Heart left ventricle (tissue), 16 donors: ENCODE measurements at regions of chr4 and their contacts with region 1.

Region 1: GRCh38 chr4:78584863-78585547 is 33.4 kb downstream of the ANXA3 start:
- DNase-seq: no peak
- ATAC-seq: no peak
- H3K4me3 ChIP-seq: no peak overlapping the region
- H3K27ac ChIP-seq: no peak overlapping the region
- H3K4me1 ChIP-seq: peaks cover 0 to 11% (median 0%) of the 10 kb centered on the region in 12 donors
- H3K27me3 ChIP-seq: no peaks in the 10 kb centered on the region
- CTCF ChIP-seq: no peak
- POLR2A ChIP-seq: no peak

Region 2: DNA sequence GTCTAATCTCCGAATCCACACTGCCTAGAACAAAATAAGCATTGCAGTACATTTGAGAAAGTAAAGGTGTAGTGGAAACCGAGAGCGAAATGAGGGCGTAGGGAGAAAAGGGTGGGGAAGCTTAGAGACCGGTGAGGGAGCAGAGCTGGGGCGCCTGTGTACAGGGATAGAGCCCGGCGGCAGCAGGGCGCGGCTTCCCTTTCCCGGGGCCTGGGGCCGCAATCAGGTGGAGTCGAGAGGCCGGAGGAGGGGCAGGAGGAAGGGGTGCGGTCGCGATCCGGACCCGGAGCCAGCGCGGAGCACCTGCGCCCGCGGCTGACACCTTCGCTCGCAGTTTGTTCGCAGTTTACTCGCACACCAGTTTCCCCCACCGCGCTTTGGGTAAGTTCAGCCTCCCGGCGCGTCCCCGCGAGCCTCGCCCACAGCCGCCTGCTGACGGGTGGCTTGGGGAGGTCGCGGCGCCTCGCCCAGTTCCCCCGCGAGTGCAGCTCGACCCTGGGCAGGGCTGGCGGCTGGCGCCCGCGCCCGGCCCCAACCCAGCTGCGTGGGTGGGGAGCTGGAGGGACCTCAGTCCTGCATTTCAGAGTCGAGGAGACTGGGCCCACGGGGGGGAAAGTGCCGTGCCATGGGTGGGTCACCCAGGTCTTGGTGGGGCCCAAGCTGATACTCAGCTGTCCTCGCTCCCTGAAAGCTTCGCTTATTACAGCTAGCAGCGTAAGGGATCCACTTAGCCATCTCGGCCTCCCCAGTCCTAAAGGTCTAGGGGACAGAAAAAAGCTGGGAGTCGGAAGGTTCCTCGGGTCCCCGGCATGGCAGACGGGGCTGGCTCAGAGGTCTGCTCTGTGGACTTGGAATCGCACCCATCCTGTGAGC is 33.3 kb before region 1 on chr4 and contains the start of gene ANXA3:
- intact Hi-C with region 1: loop called in 1 of 10 experiments (anchors 5 kb)
- DNase-seq: peak; percentile 60 to 76 (median 63)
- ATAC-seq: peak; percentile 77 to 93 (median 90)
- H3K4me3 ChIP-seq: peak within 1 kb of the TSS; percentile 57 to 79 (median 68)
- H3K27ac ChIP-seq: peak within 1 kb of the TSS; percentile 75 to 92 (median 84)
- H3K4me1 ChIP-seq: peaks cover 0 to 30% (median 5%) of the 10 kb centered on the region in 12 donors
- H3K27me3 ChIP-seq: peaks cover 0 to 12% (median 0%) of the 10 kb centered on the region in 9 donors
- CTCF ChIP-seq: peak in 1 of 12 donors; percentile 12
- POLR2A ChIP-seq: peak in 1 of 2 donors; percentile 59
- total RNA-seq, gene ANXA3: 12.9 to 119 (median 28.7) TPM

Region 3: GRCh38 chr4:78704981-78705683 is 120.1 kb after region 1 on chr4:
- intact Hi-C with region 1: no loop called
- DNase-seq: no peak
- ATAC-seq: peak in 3 of 4 donors; percentile 54 to 77 (median 65)
- H3K4me3 ChIP-seq: no peak overlapping the region
- H3K27ac ChIP-seq: no peak overlapping the region
- H3K4me1 ChIP-seq: peaks cover 0 to 10% (median 0%) of the 10 kb centered on the region in 12 donors
- H3K27me3 ChIP-seq: no peaks in the 10 kb centered on the region
- CTCF ChIP-seq: no peak
- POLR2A ChIP-seq: no peak